ENCODE measurements at regions of chr15 and their contacts with region 1.

Region 1: DNA sequence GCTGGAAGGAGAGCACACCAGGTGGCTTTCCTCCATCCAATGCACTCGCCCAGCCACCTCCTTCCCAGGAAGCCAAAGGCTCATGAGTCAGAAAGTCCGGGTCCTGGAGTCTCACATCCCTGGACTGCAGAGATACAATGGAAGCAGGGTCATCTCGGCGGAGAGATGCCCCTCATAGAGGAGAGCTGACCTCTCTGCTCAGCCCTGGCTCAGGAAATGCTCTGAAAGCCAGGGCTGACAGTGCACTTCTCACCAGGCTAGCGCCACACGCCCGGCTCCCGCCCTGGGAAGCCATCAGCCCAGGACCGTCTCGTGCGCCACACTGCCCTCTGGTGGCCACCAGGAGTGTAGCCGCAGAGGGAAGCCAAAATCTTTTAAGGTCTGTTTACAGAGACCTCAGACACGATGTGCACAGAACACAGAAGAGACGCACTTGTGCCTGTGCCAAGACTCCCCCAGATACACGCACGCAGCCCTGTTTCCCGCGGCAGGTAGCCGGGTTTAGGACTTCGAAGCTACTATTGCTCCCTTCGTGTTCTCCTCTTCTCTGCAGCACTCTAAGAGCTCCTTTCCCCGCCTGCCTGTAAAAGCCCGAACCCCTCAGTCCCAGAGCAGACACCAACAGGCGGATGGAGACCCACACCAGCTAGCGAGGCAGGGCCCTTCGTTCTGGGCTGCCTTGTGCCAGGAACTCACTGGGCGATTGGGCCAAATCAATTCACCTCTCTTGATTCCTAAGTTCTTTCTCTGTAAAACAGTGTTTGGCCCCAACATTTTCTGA is 9.7 kb downstream of the NTRK3 start:
- DNase-seq: no peak
- ATAC-seq: peak; percentile 94
- H3K4me3 ChIP-seq: no peak overlapping the region
- H3K27ac ChIP-seq: no peak overlapping the region
- H3K4me1 ChIP-seq: no peaks in the 10 kb centered on the region
- H3K27me3 ChIP-seq: peaks cover 0 to 2% of the 10 kb centered on the region in 2 experiments; a peak in 2 of 4 replicates
- CTCF ChIP-seq: peak; percentile 78 to 93 (median 90)
- EP300 ChIP-seq: no peak
- POLR2A ChIP-seq: no peak
- RAD21 ChIP-seq: peak; percentile 69

Region 2: DNA sequence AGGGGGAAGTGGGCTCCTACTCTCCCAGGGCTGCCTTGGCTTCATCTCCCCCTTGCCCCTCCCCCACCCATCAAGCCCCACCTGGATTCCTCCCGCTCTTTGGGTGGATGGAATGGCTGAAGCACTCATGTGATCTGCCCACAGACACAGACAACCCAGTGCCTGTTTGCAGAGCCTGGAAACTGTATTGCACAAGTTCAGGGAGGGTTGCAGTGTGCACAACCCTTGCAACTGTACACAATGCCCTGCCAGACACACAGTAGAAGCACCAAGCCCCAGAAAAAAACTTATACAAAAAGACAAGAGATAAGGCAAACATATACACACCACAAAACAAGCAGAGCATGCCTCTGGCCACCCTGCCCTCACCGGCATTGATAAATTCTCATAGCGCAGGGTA is 96.4 kb before region 1 on chr15:
- CTCF ChIA-PET with region 1: no interaction called
- POLR2A ChIA-PET with region 1: no interaction called
- RAD21 ChIA-PET with region 1: no interaction called
- SMC1A ChIA-PET with region 1: no interaction called
- in situ Hi-C with region 1: no loop called
- intact Hi-C with region 1: loop called (anchors 10 kb)
- DNase-seq: no peak
- ATAC-seq: no peak
- H3K4me3 ChIP-seq: no peak overlapping the region
- H3K27ac ChIP-seq: no peak overlapping the region
- H3K4me1 ChIP-seq: no peaks in the 10 kb centered on the region
- H3K27me3 ChIP-seq: no peaks in the 10 kb centered on the region
- CTCF ChIP-seq: no peak
- EP300 ChIP-seq: no peak
- POLR2A ChIP-seq: no peak
- RAD21 ChIP-seq: no peak

Region 3: DNA sequence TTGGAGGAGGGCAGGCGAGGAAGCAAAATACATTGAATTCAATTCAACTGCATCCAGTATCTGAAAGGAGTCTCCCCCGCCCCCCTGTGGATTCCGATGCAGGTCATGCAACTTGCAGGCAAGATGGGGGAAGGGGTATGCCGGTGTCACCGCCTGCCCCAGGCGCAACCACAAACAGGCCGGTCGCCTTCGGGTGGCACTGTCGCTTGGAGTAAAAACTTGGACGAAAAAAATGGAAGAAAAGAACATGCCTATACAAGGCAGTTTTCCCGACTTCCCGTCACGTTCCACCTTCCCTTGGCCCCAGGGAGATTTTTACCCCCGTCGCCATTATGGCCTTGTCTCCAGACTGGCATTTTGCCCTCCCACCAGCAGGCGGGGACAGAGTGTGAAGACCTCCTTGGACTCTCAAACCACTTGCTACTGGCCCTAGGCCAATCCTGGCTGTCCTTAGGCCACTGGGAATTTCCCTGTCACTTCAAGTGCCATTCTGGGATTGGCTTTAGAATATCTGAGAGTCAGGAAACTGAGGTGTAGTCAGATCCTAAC is 11.3 kb after region 1 on chr15:
- CTCF ChIA-PET with region 1: interaction called, 12 read pairs
- POLR2A ChIA-PET with region 1: no interaction called
- RAD21 ChIA-PET with region 1: no interaction called
- SMC1A ChIA-PET with region 1: no interaction called
- in situ Hi-C with region 1: no loop called
- intact Hi-C with region 1: no loop called
- DNase-seq: no peak
- ATAC-seq: peak; percentile 41; the same call in 1 of the 3 replicates
- H3K4me3 ChIP-seq: no peak overlapping the region
- H3K27ac ChIP-seq: no peak overlapping the region
- H3K4me1 ChIP-seq: no peaks in the 10 kb centered on the region
- H3K27me3 ChIP-seq: peaks cover 11 to 17% of the 10 kb centered on the region in 2 experiments
- CTCF ChIP-seq: peak in 2 of 3 experiments; percentile 31 to 39; a peak in 2 of 6 replicates
- EP300 ChIP-seq: no peak
- POLR2A ChIP-seq: no peak
- RAD21 ChIP-seq: no peak

Region 4: GRCh38 chr15:88331280-88331679 is 84.4 kb after region 1 on chr15:
- CTCF ChIA-PET with region 1: no interaction called
- POLR2A ChIA-PET with region 1: no interaction called
- RAD21 ChIA-PET with region 1: no interaction called
- SMC1A ChIA-PET with region 1: no interaction called
- in situ Hi-C with region 1: no loop called
- intact Hi-C with region 1: loop called (anchors 1 kb)
- DNase-seq: no peak
- ATAC-seq: peak; percentile 94
- H3K4me3 ChIP-seq: no peak overlapping the region
- H3K27ac ChIP-seq: no peak overlapping the region
- H3K4me1 ChIP-seq: no peaks in the 10 kb centered on the region
- H3K27me3 ChIP-seq: 0 out of 4 replicates have a peak, but pooled peaks cover 0 to 2% of the 10 kb centered on the region in 2 experiments
- CTCF ChIP-seq: peak; percentile 70 to 82 (median 81)
- EP300 ChIP-seq: no peak
- POLR2A ChIP-seq: no peak
- RAD21 ChIP-seq: peak; percentile 46